ENCODE measurements at regions of chr11 and their contacts with region 1.

Region 1: GRCh38 chr11:124793466-124794278 is 6.5 kb downstream of the MSANTD2 start:
- DNase-seq: no peak
- H3K4me3 ChIP-seq: no peak overlapping the region
- H3K27me3 ChIP-seq: no peaks in the 10 kb centered on the region
- CTCF ChIP-seq: peak; percentile 78

Region 2: DNA sequence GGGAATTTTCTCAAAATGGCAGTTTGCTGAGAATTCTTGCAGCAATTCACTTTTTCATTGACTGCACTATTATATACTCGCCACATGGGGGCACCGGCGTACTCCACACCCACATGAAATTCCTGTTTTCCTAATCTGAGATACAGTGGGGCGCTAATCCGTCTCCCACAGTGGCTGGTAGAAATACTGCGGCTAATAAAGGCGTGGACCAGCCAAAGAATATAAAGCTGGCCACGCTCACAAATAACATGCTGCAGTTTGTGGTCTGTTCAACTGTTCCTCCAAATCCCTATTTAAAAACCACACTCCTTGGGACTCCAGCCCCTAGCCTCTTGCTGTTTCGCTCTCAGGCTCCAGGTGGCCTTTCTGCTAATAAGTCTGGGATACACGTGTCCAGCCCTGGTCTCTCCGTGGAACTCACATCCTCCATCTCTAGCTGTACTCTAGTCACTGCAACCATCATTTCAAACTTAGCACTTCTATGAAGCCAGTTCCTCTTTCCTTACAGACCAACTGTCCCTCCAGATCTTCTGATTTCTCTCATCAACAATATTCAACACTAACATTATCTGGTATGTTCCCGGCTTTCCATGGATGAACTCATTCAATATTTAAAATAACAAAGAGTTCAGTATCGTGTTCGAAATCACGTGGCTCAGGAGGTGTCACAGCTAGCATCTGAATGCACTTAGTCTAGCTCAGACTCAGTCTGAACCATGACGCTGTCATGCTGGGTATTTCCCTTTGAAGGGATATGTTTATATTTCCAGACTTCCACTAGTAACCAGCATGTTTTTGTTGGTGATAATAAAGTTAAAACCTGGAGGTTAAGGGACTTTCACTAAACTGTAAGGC is 149.0 kb before region 1 on chr11:
- CTCF ChIA-PET with region 1: interaction called, 10 read pairs
- POLR2A ChIA-PET with region 1: no interaction called
- DNase-seq: no peak
- H3K4me3 ChIP-seq: no peak overlapping the region
- H3K27me3 ChIP-seq: no peaks in the 10 kb centered on the region
- CTCF ChIP-seq: peak; percentile 82

Region 3: GRCh38 chr11:124758317-124759203 is 35.1 kb before region 1 on chr11:
- CTCF ChIA-PET with region 1: interaction called, 10 read pairs
- POLR2A ChIA-PET with region 1: no interaction called
- DNase-seq: no peak
- H3K4me3 ChIP-seq: peak overlapping the region; percentile 33
- H3K27me3 ChIP-seq: peaks cover 23% of the 10 kb centered on the region
- CTCF ChIP-seq: peak; percentile 82

Region 4: DNA sequence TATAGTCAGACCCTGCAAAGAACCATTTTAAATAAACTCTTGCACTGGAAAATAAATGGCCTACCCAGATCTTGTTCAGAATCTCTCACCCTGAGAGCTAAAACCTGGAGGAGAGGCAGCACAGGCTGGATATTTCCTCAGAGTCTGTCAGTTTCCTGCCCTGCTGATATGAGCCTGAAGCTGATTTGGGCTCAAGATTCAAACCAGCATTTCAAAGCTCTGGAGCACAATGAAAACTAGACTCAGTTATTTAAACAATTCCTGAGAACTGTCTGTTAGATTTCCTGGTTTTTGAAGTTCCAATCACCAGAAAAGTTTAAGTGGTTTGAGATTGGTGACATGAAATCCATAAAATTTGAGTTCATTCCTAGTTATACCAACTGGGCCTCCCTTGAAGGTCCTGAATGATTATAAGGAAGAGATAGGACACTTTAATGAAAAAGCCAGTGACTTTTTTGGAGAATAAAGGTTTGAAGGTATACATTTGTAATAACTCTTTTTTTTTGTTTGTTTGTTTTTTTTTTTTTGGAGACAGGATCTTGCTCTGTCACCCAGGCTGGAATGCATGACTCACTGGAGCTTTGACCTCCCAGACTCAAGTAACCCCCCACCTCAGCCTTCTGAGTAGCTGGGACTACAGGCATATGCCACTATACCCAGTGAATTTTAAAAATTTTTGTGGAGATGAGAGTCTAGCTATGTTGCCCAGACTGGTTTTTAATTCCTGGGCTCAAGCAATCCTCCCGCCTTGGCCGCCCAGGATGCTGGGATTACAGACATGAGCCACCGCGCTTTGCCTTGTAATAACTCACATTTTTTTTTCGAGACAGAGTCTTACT is 23.7 kb before region 1 on chr11:
- CTCF ChIA-PET with region 1: interaction called, 15 read pairs
- POLR2A ChIA-PET with region 1: no interaction called
- DNase-seq: no peak
- H3K4me3 ChIP-seq: no peak overlapping the region
- H3K27me3 ChIP-seq: no peaks in the 10 kb centered on the region
- CTCF ChIP-seq: no peak

Region 5: DNA sequence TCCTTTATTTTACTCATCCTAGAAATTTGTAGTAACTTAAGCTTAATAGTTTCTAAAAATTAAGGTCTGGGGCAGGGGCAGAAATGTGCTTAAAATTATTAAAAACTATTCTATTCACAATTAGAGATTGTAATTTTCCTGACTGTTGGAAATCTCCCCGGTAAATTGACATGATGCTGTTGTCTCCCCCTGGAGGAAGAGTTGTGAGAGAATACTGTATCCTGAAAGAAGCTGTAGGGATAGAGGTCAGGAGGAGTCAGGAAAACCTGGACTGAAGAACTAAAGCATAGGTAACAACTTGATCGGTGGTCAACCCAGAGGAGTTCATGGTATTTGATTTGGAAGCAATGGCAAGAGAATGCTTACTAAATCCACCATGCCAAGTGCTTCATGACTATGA is 15.4 kb before region 1 on chr11:
- CTCF ChIA-PET with region 1: interaction called, 15 read pairs
- POLR2A ChIA-PET with region 1: no interaction called
- DNase-seq: no peak
- H3K4me3 ChIP-seq: no peak overlapping the region
- H3K27me3 ChIP-seq: no peaks in the 10 kb centered on the region
- CTCF ChIP-seq: no peak

Region 6: GRCh38 chr11:124812876-124813275 is 19.2 kb after region 1 on chr11:
- CTCF ChIA-PET with region 1: interaction called, 11 read pairs
- POLR2A ChIA-PET with region 1: no interaction called
- DNase-seq: no peak
- H3K4me3 ChIP-seq: no peak overlapping the region
- H3K27me3 ChIP-seq: peaks cover 3% of the 10 kb centered on the region; the same call in 1 of the 2 replicates
- CTCF ChIP-seq: no peak